BJ (cell line): ENCODE measurements at regions of chr2 and their contacts with region 1.

Region 1: GRCh38 chr2:3741396-3741795 is 38.0 kb downstream of the DCDC2C start:
- DNase-seq: no peak
- H3K4me3 ChIP-seq: no peak overlapping the region
- H3K27me3 ChIP-seq: no peaks in the 10 kb centered on the region
- CTCF ChIP-seq: no peak

Region 2: DNA sequence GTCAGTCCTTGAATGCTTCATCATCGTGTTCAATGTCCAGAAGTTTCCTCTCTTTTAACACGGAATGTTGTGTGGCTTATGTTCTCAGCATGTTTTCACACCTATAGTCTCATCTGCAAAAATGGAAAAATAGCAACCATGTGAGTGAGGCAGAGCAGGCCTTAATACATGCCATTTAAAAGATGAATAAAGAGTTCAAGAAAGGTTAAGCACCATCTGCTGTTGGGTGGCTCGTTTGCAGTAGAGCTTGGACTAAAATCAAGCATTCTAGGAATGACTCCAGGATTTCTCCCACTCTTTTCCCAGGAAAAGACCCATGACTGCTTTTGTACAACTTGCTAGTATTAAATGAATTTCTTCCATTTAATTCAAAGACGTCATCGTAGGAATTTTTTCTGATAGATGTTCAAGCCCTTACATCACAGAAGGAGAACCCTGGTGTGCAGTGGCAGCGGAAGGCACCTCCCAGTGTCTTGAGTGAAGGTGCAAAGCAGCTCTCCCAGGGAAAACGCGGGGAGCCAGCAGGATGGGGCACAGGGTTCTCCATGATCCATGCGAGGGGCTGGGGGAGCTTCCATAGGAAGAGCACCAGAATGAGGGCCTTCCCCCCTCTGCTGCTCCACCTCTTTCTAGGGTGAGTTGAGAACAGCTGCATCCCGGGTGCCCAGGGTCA is 28.4 kb before region 1 on chr2:
- CTCF ChIA-PET with region 1: no interaction called
- POLR2A ChIA-PET with region 1: no interaction called
- DNase-seq: no peak
- H3K4me3 ChIP-seq: no peak overlapping the region
- H3K27me3 ChIP-seq: no peaks in the 10 kb centered on the region; the same call in 1 of the 2 replicates
- CTCF ChIP-seq: no peak

Region 3: DNA sequence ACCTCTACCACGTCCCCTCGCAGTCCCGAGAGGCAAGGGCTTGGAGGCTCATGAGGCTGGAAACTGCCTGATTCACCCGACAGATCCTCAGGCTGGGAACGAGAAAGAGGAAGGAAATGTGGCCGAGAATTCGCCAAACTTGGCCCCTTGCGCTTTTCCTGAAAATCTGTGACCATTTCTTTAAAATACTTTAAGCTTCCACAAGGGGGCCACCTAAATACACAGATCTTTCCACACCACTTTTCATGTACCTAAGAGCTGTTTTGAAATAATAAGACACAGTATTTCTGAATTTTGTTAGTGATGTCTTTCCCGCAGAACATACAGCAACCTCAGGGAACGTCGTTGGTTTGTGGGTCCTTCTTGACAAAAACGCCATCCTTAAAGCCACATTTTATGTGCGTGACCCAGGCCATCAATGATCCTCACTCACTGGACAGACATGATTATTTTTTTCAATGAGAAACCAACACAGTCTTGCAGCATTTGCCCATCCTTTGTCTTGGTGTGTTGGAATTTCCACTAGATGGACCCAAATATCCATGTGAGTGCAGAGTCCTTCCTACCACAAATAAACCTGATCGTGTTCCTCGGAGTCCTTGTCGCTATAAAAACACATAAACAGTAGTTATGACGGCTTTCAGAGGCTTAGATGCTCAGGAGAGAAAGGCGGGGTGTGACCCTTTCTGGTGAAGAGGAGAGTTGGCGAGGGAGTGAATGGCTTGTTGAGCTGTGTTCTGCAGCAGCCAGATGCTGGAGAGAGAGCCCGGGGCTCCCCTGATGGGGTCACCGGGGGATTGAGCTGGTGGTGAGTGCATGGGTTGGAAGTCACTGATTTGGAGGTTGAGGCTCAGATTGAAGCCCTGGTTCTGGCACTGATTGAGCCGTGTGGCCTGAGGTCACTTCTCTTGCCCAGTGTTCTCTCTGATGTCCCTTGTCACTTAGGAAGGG is 13.0 kb before region 1 on chr2:
- CTCF ChIA-PET with region 1: interaction called, 10 read pairs
- POLR2A ChIA-PET with region 1: no interaction called
- DNase-seq: no peak
- H3K4me3 ChIP-seq: no peak overlapping the region
- H3K27me3 ChIP-seq: no peaks in the 10 kb centered on the region
- CTCF ChIP-seq: peak; percentile 57

Region 4: GRCh38 chr2:3814706-3815245 is 73.4 kb after region 1 on chr2:
- CTCF ChIA-PET with region 1: no interaction called
- POLR2A ChIA-PET with region 1: no interaction called
- DNase-seq: no peak
- H3K4me3 ChIP-seq: no peak overlapping the region
- H3K27me3 ChIP-seq: no peaks in the 10 kb centered on the region
- CTCF ChIP-seq: no peak